SK-N-SH (cell line): ENCODE measurements at regions of chr6 and their contacts with region 1.

Region 1: GRCh38 chr6:137297887-137298286 is 78.7 kb upstream of the IFNGR1 start:
- DNase-seq: no peak
- H3K4me3 ChIP-seq: no peak overlapping the region
- H3K27ac ChIP-seq: no peak overlapping the region
- H3K4me1 ChIP-seq: no peaks in the 10 kb centered on the region
- H3K27me3 ChIP-seq: no peaks in the 10 kb centered on the region; the same call in 1 of the 2 replicates
- CTCF ChIP-seq: no peak
- EP300 ChIP-seq: no peak
- RAD21 ChIP-seq: no peak

Region 2: DNA sequence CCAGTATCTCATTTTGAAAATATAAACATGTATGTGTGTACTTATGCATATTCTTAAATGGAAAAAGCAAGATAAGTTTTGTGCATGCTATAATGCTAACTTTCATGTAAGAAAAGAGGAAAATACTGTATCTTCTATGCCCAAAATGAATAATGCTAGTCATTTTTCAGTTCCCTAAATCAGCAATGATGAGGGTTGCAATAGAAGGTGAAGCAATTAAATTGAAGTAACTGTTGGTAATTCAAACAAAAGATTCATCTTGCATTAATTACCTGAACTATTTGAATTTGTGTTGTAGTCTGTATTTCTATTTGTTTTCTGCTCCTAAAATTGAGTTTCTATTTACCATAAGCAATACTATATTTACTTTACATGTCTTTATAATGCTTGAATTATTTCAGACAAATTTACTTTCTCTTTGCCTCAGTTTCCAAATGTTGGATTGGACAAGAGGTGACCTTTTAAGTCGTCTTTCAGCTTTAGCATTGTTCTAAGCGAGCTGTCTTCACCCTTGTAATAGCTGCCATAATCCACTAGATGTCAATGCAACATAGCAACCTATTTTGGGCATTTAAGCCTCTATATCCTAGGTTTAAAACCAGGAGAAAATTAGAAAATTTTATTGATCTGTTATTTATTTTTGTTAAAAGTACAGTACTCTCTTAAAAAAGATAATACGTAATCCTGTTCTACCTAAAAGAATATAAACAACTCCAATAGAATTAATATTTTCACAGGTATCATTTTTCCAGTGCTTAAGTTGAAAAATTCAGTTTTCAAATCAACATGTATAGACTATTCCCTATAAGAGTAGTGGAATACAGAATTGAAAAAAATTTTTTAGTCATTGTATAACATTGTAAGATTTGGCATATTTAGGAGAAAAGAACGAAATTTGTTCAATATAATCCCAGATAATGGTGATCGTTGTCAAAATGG is 26.4 kb before region 1 on chr6:
- CTCF ChIA-PET with region 1: interaction called, 10 read pairs
- POLR2A ChIA-PET with region 1: no interaction called
- DNase-seq: peak; percentile 30
- H3K4me3 ChIP-seq: peak overlapping the region in 1 of 2 experiments; percentile 34; a peak in 1 of 4 replicates
- H3K27ac ChIP-seq: no peak overlapping the region
- H3K4me1 ChIP-seq: no peaks in the 10 kb centered on the region
- H3K27me3 ChIP-seq: no peaks in the 10 kb centered on the region; the same call in 1 of the 2 replicates
- CTCF ChIP-seq: peak; percentile 82
- EP300 ChIP-seq: no peak
- RAD21 ChIP-seq: peak; percentile 86